ENCODE measurements at regions of chr5 and their contacts with region 1.

Region 1: DNA sequence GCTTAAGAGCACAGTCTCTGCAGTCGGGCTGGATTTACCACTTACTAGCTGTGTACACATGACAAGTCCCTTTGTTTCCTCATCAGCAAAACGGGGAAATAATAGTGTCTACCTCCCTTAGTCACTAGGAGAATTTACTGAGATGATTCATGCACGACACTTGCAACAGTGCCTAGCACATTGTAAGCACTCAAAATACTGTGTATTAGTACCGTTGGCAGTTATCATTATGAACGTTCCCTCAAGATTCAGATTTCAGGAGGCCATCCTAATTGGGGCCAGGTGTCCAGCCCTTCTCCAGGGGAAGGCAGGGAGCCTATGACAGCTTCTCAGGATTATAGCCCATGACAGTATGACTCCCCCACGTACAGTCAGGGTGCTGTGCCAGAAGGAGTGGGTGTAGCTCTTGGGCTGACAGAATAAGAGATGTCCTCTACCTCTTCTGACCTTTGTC is 164.3 kb downstream of the DOCK2 start:
- DNase-seq: no peak
- ATAC-seq: no peak
- H3K4me3 ChIP-seq: no peak overlapping the region
- H3K4me3 Mint-ChIP-seq: no peak overlapping the region
- H3K27ac ChIP-seq: no peak overlapping the region
- H3K27ac Mint-ChIP-seq: no peak overlapping the region
- H3K4me1 ChIP-seq: peaks cover 9 to 12% of the 10 kb centered on the region in 2 donors
- H3K4me1 Mint-ChIP-seq: peaks cover 28% of the 10 kb centered on the region
- H3K27me3 ChIP-seq: no peaks in the 10 kb centered on the region
- H3K27me3 Mint-ChIP-seq: no peaks in the 10 kb centered on the region
- CTCF ChIP-seq: no peak

Region 2: DNA sequence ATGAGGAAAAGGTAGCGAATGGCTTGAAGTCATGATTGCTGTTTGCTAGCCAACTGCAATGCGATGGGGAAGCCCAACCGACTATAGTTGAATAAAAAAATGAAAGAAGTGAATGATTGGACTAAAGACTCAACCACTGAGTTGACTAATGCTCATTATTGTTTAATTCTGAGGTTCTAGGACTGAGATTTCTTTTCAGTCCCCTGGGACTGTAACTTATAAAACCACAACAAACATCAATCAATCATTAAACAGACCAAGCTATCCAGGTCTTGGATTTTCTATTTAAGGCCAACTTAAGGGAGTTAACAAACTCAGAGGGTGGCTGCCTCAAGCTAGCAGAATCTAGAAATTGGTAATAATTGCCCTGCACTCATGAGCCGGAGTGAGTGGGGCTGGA is 10.1 kb before region 1 on chr5:
- CTCF ChIA-PET with region 1: no interaction called
- POLR2A ChIA-PET with region 1: interaction called, 13 read pairs
- intact Hi-C with region 1: no loop called
- DNase-seq: no peak
- ATAC-seq: no peak
- H3K4me3 ChIP-seq: no peak overlapping the region
- H3K4me3 Mint-ChIP-seq: no peak overlapping the region
- H3K27ac ChIP-seq: no peak overlapping the region
- H3K27ac Mint-ChIP-seq: no peak overlapping the region
- H3K4me1 ChIP-seq: no peaks in the 10 kb centered on the region
- H3K4me1 Mint-ChIP-seq: peaks cover 2% of the 10 kb centered on the region
- H3K27me3 ChIP-seq: no peaks in the 10 kb centered on the region
- H3K27me3 Mint-ChIP-seq: no peaks in the 10 kb centered on the region
- CTCF ChIP-seq: no peak

Measured in B cell (primary cell).